ENCODE measurements at regions of chr12 and their contacts with region 1.

Region 1: DNA sequence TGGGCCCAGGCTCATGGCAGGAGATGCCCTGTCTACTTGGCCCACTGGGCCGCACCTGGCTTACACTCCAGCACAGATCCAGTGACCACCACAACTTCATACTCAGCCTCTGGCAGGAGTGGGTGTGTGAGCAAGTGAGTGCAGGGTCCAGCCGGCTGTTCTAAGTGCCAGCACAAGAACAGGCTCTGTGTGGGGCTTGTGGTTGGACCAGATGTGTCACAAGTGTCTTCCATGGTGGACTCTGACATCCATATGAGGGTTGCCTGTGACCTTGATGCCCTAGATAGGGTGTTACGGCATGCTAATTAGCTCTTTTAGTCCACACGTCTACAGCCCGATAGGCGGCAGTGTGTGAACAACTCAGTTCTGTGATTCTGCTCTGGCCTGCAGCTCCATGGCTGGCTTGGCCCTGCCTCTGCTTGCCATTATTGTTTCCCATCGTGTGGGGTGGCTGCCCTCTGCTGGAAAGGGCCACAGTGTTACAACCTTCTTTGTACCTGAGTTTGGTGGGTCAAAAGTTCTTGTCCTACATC is 1089.1 kb downstream of the SLC6A15 start:
- DNase-seq: no peak
- ATAC-seq: no peak
- H3K4me3 ChIP-seq: no peak overlapping the region
- H3K27ac ChIP-seq: no peak overlapping the region
- H3K4me1 ChIP-seq: no peaks in the 10 kb centered on the region
- H3K27me3 ChIP-seq: no peaks in the 10 kb centered on the region
- CTCF ChIP-seq: no peak
- POLR2A ChIP-seq: no peak
- RAD21 ChIP-seq: no peak

Region 2: GRCh38 chr12:83434600-83434999 is 388.9 kb before region 1 on chr12:
- CTCF ChIA-PET with region 1: no interaction called
- POLR2A ChIA-PET with region 1: no interaction called
- dilution Hi-C with region 1: no loop called
- in situ Hi-C with region 1: no loop called
- intact Hi-C with region 1: no loop called
- DNase-seq: no peak
- ATAC-seq: no peak
- H3K4me3 ChIP-seq: no peak overlapping the region
- H3K27ac ChIP-seq: no peak overlapping the region
- H3K4me1 ChIP-seq: no peaks in the 10 kb centered on the region
- H3K27me3 ChIP-seq: no peaks in the 10 kb centered on the region
- CTCF ChIP-seq: no peak
- POLR2A ChIP-seq: no peak
- RAD21 ChIP-seq: no peak

Region 3: GRCh38 chr12:83784298-83784890 is 39.1 kb before region 1 on chr12:
- CTCF ChIA-PET with region 1: no interaction called
- POLR2A ChIA-PET with region 1: no interaction called
- dilution Hi-C with region 1: no loop called
- in situ Hi-C with region 1: no loop called
- intact Hi-C with region 1: no loop called
- DNase-seq: no peak
- ATAC-seq: no peak
- H3K4me3 ChIP-seq: no peak overlapping the region
- H3K27ac ChIP-seq: no peak overlapping the region
- H3K4me1 ChIP-seq: no peaks in the 10 kb centered on the region
- H3K27me3 ChIP-seq: no peaks in the 10 kb centered on the region
- CTCF ChIP-seq: no peak
- POLR2A ChIP-seq: no peak
- RAD21 ChIP-seq: no peak

Region 4: DNA sequence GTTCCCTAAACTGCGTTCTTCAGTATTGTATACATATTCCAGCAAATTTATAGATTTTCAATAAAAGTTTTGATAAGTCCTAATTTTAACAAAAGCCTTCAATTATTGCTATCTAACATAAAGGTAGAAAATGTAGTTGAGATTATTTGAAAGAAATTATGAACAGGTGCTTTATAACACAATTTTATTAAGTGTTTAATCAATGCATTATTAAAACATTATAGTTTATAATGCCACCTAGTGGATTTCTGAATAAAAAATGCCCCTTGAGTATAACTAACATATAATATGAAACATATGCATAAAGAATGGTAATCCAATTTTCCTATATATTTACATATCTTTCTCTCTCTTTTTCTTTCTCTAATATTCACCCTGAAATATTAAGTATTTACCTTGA is 573.8 kb after region 1 on chr12:
- CTCF ChIA-PET with region 1: interaction called, 5 read pairs
- POLR2A ChIA-PET with region 1: no interaction called
- dilution Hi-C with region 1: no loop called
- in situ Hi-C with region 1: loop called (anchors 10 kb)
- intact Hi-C with region 1: loop called (anchors 1 kb)
- DNase-seq: no peak
- ATAC-seq: no peak
- H3K4me3 ChIP-seq: no peak overlapping the region
- H3K27ac ChIP-seq: no peak overlapping the region
- H3K4me1 ChIP-seq: no peaks in the 10 kb centered on the region
- H3K27me3 ChIP-seq: no peaks in the 10 kb centered on the region
- CTCF ChIP-seq: peak; percentile 38; the same call in 1 of the 2 replicates
- POLR2A ChIP-seq: no peak
- RAD21 ChIP-seq: no peak

Measured in IMR-90 (cell line).